HAP-1 (cell line): ENCODE measurements at regions of chr9 and their contacts with region 1.

Region 1: DNA sequence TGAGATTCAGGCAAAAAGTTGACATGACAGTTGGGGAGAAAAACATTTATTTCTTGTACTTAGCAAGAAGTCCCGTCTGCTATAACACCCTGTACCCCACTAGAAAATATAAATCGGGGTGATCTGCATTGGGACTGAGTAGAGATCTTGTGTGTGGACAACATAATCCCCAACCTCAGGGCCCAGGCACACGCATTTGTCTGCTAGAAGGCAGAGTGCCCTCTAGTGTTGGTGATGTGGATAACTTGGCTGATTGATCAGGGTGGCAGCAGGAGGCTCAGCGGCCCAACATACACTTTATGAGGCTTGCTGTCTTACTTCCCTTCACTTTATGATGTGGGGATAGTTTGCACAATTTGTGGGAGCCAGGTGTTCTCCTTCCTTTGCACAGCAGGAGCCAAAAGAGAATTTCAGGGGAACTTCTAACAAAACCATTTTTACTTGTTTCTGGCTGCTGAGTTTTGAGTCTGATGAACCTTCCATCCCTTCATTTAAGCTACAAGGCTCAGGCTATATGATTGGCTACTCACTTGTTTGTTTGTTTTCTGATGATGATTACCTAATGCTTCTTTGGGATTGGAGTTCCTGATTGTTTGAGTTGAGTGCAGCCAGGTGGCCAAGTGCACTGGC is 263.2 kb downstream of the DMAC1 start:
- DNase-seq: peak; percentile 39 to 77
- H3K4me3 ChIP-seq: no peak overlapping the region
- H3K4me1 ChIP-seq: no peaks in the 10 kb centered on the region
- H3K27me3 ChIP-seq: no peaks in the 10 kb centered on the region

Region 2: GRCh38 chr9:6907772-6908381 is 628.5 kb before region 1 on chr9:
- in situ Hi-C with region 1: loop called (anchors 10 kb)
- DNase-seq: peak; percentile 45 to 66
- H3K4me3 ChIP-seq: no peak overlapping the region
- H3K4me1 ChIP-seq: peaks cover 10% of the 10 kb centered on the region
- H3K27me3 ChIP-seq: no peaks in the 10 kb centered on the region

Region 3: DNA sequence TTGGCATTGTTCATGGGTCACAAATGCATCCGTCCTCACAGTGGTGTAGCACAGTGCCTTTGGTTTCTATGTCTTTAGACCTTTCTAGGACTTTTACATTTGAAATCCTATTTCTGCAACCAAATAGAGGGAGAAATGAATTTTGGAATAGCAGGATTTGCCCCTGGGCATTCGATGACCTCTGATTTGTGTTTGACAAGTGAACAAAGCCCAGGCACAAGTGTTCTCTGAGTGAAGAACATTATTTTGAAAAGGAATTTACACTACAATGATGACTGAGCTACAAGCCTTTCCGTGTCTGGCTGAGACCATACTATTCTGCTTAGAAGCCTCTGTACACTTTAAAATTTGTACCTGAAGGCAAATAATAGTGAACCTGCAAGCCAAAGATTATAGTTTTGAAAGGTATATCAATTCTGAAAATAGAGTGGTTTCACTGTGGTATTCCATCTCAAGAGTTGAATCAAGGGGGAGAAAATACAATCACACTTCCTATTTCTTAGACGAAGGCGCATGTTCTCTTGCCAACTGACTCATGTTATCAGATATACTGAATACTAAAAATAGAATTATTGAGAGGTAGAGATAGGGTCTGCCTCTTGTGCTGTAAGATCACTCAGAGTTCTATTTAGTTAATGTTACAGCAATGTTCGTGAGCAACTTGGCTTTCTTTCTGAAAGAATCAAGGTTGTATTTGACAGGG is 481.1 kb before region 1 on chr9:
- in situ Hi-C with region 1: loop called (anchors 10 kb)
- DNase-seq: peak; percentile 68 to 88
- H3K4me3 ChIP-seq: no peak overlapping the region
- H3K4me1 ChIP-seq: peaks cover 19% of the 10 kb centered on the region
- H3K27me3 ChIP-seq: no peaks in the 10 kb centered on the region

Region 4: GRCh38 chr9:7489036-7489435 is 47.4 kb before region 1 on chr9:
- in situ Hi-C with region 1: no loop called
- DNase-seq: peak; percentile 8 to 26
- H3K4me3 ChIP-seq: no peak overlapping the region
- H3K4me1 ChIP-seq: no peaks in the 10 kb centered on the region
- H3K27me3 ChIP-seq: no peaks in the 10 kb centered on the region